Vagina (tissue), 2 donors: ENCODE measurements at regions of chr4 and their contacts with region 1.

Region 1: DNA sequence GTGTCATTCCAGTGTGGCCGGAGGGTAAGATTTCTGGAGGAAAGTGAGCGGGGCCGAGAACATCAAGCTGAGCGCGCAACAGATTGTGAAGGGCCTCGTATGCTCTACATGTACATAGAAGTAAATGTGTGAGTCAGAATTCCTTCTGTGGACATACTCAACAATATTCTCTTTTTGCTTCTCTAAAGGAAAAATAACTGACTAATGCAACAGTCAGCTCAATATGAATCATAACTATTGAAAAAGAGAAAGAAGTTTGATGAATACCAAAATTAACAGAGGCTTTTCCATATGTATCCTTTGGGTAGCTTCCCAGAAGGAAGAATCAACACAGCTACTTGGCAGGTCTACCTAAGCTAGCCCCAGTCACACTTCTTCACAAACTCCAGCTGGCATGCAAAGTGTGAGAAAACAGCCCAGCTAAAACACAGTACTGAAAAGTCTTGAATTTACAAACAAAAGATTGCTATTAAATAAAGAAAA is 87.5 kb upstream of the ZFP42 start:
- DNase-seq: no peak
- H3K4me3 ChIP-seq: no peak overlapping the region
- H3K27ac ChIP-seq: no peak overlapping the region
- H3K4me1 ChIP-seq: no peaks in the 10 kb centered on the region
- H3K27me3 ChIP-seq: no peaks in the 10 kb centered on the region
- CTCF ChIP-seq: no peak
- POLR2A ChIP-seq: no peak

Region 2: GRCh38 chr4:187962926-187963325 is 54.8 kb after region 1 on chr4:
- intact Hi-C with region 1: no loop called
- DNase-seq: no peak
- H3K4me3 ChIP-seq: no peak overlapping the region
- H3K27ac ChIP-seq: no peak overlapping the region
- H3K4me1 ChIP-seq: no peaks in the 10 kb centered on the region
- H3K27me3 ChIP-seq: no peaks in the 10 kb centered on the region
- CTCF ChIP-seq: no peak
- POLR2A ChIP-seq: no peak

Region 3: GRCh38 chr4:188032170-188032569 is 124.0 kb after region 1 on chr4:
- intact Hi-C with region 1: no loop called
- DNase-seq: no peak
- H3K4me3 ChIP-seq: no peak overlapping the region
- H3K27ac ChIP-seq: no peak overlapping the region
- H3K4me1 ChIP-seq: no peaks in the 10 kb centered on the region
- H3K27me3 ChIP-seq: no peaks in the 10 kb centered on the region
- CTCF ChIP-seq: no peak
- POLR2A ChIP-seq: no peak

Region 4: DNA sequence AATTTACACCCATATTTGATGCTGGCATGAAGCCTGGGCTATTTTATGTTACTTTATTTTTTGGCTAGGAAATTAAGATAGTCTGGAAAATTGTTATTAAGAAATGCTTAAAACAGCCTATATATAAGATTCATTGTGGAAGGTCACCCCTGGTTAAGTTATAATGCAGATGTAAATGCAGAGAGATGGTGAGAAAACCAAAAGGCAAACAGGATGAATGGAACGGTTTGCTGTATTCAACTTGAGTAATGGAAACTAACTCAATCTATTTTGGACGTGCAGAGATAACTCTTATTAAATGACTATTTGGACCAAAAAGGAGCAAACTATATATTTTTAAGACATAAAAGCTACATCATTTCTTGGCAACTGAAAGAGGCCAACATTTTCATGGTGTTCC is 1586.3 kb after region 1 on chr4:
- intact Hi-C with region 1: loop called (anchors 5 kb)
- DNase-seq: no peak
- H3K4me3 ChIP-seq: no peak overlapping the region
- H3K27ac ChIP-seq: no peak overlapping the region
- H3K4me1 ChIP-seq: no peaks in the 10 kb centered on the region
- H3K27me3 ChIP-seq: no peaks in the 10 kb centered on the region
- CTCF ChIP-seq: no peak
- POLR2A ChIP-seq: no peak